HepG2 (cell line): ENCODE measurements at regions of chr7 and their contacts with region 1.

Region 1: DNA sequence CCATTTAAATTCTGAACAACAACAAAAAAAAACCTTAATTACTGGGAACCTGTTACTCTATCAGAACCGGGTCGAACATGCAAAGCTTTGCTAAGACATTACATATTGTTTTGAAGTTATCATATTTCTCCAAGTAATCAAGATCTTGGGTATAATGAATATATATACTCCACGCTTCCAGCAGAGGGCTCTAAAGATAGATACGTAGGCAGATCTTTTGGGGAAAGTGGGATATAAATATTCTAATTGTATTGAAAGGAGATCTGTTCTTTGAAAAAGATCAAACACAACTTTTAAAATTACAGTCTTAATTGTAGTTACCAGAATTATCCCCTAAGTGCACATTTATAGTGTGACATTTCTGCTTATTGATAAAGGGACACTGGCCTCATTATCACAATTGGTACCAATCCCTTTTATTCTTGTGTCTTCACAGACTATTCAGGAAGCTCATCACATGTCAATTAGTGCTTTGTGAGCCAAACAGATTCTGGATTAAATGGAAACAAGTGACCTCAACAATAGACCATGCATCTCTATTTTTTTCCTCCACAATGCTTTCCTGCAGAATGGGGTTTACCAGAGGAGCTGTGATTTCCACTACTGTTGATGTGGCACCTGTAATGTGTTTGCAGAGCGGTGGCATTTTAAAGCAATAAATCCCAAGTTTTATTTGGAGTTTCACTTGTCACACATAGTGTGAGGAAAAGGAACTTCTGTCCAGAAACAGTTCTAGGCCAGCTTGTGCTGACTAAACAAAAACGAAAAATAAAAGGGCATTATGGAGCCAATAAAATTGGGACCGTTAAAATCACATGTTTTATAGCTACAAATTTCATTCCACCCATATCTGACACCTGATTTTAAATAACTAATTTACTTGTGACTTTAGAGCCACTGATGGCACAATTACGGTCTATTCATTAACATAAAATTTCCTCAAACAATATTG is 122.4 kb downstream of the CTTNBP2 start:
- DNase-seq: peak; percentile 5
- ATAC-seq: no peak
- H3K4me3 ChIP-seq: no peak overlapping the region
- H3K27ac ChIP-seq: no peak overlapping the region
- H3K4me1 ChIP-seq: no peaks in the 10 kb centered on the region
- H3K27me3 ChIP-seq: no peaks in the 10 kb centered on the region
- CTCF ChIP-seq: peak; percentile 27; the same call in 1 of the 2 replicates
- EP300 ChIP-seq: no peak
- POLR2A ChIP-seq: no peak
- RAD21 ChIP-seq: no peak

Region 2: DNA sequence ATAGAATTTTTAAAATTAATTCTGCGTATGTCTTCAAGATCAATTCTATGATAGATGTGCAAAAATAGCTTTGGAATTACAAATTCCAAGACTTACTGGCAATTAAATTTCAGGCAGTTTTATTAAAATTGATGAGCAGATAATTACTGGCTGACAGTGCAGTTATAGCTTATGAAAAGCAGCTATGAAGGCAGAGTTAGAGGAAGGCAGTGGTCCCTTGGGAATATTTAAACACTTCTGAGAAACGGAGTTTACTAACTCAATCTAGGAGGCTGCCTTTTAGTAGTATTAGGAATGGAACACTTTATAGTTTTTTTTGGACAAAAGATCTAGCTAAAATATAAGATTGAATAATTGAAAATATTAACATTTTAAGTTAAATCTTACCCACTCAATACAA is 200.3 kb before region 1 on chr7:
- CTCF ChIA-PET with region 1: no interaction called
- POLR2A ChIA-PET with region 1: no interaction called
- in situ Hi-C with region 1: no loop called
- intact Hi-C with region 1: no loop called
- DNase-seq: no peak
- ATAC-seq: no peak
- H3K4me3 ChIP-seq: no peak overlapping the region
- H3K27ac ChIP-seq: no peak overlapping the region
- H3K4me1 ChIP-seq: no peaks in the 10 kb centered on the region
- H3K27me3 ChIP-seq: no peaks in the 10 kb centered on the region
- CTCF ChIP-seq: no peak
- EP300 ChIP-seq: no peak
- POLR2A ChIP-seq: no peak
- RAD21 ChIP-seq: no peak

Region 3: DNA sequence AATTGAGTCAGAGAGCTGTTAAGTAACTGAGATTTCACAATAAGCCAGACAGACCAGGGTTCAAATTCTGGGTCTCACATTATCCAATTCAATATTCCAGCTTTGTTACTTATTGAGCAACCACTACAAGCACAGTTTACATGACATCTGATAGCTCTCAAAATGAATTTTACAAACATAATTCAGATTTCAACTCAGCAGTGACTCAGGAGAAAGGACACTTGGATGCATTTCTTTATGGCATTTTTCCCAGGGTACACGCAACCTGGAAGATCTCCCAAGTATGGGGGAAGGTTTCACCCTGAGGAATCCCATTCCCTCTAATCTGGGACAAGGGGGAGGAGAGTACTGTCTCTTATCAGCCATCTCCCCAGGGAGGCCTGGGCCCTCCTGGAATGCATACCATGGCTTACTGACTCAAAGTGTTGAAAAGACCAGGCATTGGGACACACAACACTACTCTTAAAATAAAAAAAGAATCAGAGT is 168.6 kb before region 1 on chr7:
- CTCF ChIA-PET with region 1: no interaction called
- POLR2A ChIA-PET with region 1: no interaction called
- in situ Hi-C with region 1: no loop called
- intact Hi-C with region 1: no loop called
- DNase-seq: no peak
- ATAC-seq: peak; percentile 60
- H3K4me3 ChIP-seq: no peak overlapping the region
- H3K27ac ChIP-seq: no peak overlapping the region
- H3K4me1 ChIP-seq: peaks cover 8% of the 10 kb centered on the region; the same call in 1 of the 2 replicates
- H3K27me3 ChIP-seq: no peaks in the 10 kb centered on the region
- CTCF ChIP-seq: no peak
- EP300 ChIP-seq: no peak
- POLR2A ChIP-seq: no peak
- RAD21 ChIP-seq: no peak

Region 4: DNA sequence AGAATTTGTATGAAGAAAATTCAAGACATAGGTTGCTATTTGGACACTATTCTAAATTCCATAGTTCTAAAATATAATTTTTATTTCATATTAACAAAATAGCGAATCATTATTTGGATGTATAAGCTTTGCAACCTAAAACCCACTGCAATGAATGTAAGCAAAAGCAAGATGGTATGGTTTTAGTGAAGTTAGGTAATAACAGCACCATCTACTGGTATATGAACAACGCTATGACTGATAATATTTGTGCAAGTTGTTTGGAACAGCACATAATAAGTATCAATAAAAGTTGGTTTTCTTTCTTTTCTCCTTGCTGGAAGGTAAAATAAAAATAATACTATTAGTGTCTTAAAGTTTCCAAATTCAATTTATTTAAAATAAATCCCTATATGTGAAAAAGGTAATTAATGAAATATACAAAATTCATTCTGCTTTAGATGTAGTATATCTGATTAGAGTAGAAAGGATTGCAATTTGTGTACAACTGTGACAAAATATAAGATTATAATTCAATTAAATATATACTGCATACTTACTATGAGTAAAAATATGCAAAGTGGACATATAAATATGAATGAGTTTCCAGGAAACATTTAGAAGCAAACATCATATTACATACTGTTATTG is 354.0 kb after region 1 on chr7:
- CTCF ChIA-PET with region 1: interaction called, 6 read pairs
- POLR2A ChIA-PET with region 1: no interaction called
- in situ Hi-C with region 1: no loop called
- intact Hi-C with region 1: loop called (anchors 1 kb)
- DNase-seq: no peak
- ATAC-seq: peak; percentile 54; the same call in 1 of the 3 replicates
- H3K4me3 ChIP-seq: no peak overlapping the region
- H3K27ac ChIP-seq: no peak overlapping the region
- H3K4me1 ChIP-seq: no peaks in the 10 kb centered on the region
- H3K27me3 ChIP-seq: no peaks in the 10 kb centered on the region
- CTCF ChIP-seq: peak; percentile 57
- EP300 ChIP-seq: no peak
- POLR2A ChIP-seq: no peak
- RAD21 ChIP-seq: no peak

Region 5: GRCh38 chr7:118153551-118154177 is 402.8 kb after region 1 on chr7:
- CTCF ChIA-PET with region 1: interaction called, 4 read pairs
- POLR2A ChIA-PET with region 1: no interaction called
- in situ Hi-C with region 1: no loop called
- intact Hi-C with region 1: loop called (anchors 1 kb)
- DNase-seq: peak; percentile 23
- ATAC-seq: no peak
- H3K4me3 ChIP-seq: no peak overlapping the region
- H3K27ac ChIP-seq: no peak overlapping the region
- H3K4me1 ChIP-seq: no peaks in the 10 kb centered on the region
- H3K27me3 ChIP-seq: no peaks in the 10 kb centered on the region; a peak in 1 of 5 replicates
- CTCF ChIP-seq: peak; percentile 61
- EP300 ChIP-seq: no peak
- POLR2A ChIP-seq: no peak
- RAD21 ChIP-seq: no peak

Region 6: GRCh38 chr7:118195837-118196474 is 445.1 kb after region 1 on chr7:
- CTCF ChIA-PET with region 1: interaction called, 4 read pairs
- POLR2A ChIA-PET with region 1: no interaction called
- in situ Hi-C with region 1: no loop called
- intact Hi-C with region 1: loop called (anchors 1 kb)
- DNase-seq: peak; percentile 61
- ATAC-seq: peak; percentile 91
- H3K4me3 ChIP-seq: no peak overlapping the region
- H3K27ac ChIP-seq: no peak overlapping the region
- H3K4me1 ChIP-seq: no peaks in the 10 kb centered on the region
- H3K27me3 ChIP-seq: no peaks in the 10 kb centered on the region
- CTCF ChIP-seq: peak; percentile 70
- EP300 ChIP-seq: no peak
- POLR2A ChIP-seq: no peak
- RAD21 ChIP-seq: no peak